ENCODE measurements at regions of chr2 and their contacts with region 1.

Region 1: GRCh38 chr2:196205881-196206435 is 34.6 kb upstream of the STK17B start:
- DNase-seq: no peak
- H3K4me3 ChIP-seq: no peak overlapping the region
- H3K4me3 Mint-ChIP-seq: no peak overlapping the region
- H3K27ac ChIP-seq: no peak overlapping the region
- H3K27ac Mint-ChIP-seq: peak overlapping the region in 3 of 7 donors; percentile 14 to 85 (median 24)
- H3K4me1 ChIP-seq: peaks cover 53% of the 10 kb centered on the region
- H3K4me1 Mint-ChIP-seq: peaks cover 46 to 55% (median 49%) of the 10 kb centered on the region in 4 donors
- H3K27me3 ChIP-seq: no peaks in the 10 kb centered on the region
- H3K27me3 Mint-ChIP-seq: no peaks in the 10 kb centered on the region

Region 2: DNA sequence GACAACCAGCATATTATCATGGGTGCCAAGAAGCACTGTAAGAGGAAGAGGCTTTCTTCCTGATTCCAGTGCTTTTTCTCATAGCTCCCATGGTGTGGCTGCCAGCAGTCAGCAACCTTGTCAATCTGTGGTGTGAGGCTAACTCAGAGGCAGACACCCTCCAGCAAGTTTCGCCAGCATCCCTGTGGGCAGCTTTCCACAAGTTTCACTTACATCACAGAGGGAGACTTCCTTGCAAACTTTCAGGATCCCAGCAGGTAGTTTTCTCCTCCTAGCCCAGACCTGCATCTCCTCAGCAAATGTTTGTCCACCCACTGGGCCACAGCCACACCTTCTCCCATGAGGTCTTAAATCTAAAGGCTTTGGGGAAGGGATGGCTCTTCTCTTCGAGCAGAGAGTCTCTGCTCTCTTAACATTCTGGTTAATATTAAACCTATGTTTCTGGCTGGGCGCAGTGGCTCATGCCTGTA is 146.4 kb before region 1 on chr2:
- CTCF ChIA-PET with region 1: no interaction called
- POLR2A ChIA-PET with region 1: no interaction called
- intact Hi-C with region 1: no loop called
- DNase-seq: no peak
- H3K4me3 ChIP-seq: no peak overlapping the region
- H3K4me3 Mint-ChIP-seq: no peak overlapping the region
- H3K27ac ChIP-seq: no peak overlapping the region
- H3K27ac Mint-ChIP-seq: peak overlapping the region in 1 of 7 donors; percentile 31
- H3K4me1 ChIP-seq: no peaks in the 10 kb centered on the region
- H3K4me1 Mint-ChIP-seq: no peaks in the 10 kb centered on the region
- H3K27me3 ChIP-seq: no peaks in the 10 kb centered on the region
- H3K27me3 Mint-ChIP-seq: peaks cover 3 to 7% of the 10 kb centered on the region in 2 donors

Region 3: GRCh38 chr2:196195302-196195701 is 10.7 kb before region 1 on chr2:
- CTCF ChIA-PET with region 1: interaction called, 10 read pairs
- POLR2A ChIA-PET with region 1: interaction called, 45 read pairs
- intact Hi-C with region 1: loop called (anchors 1 kb)
- DNase-seq: no peak
- H3K4me3 ChIP-seq: peak overlapping the region in 1 of 2 donors; percentile 34
- H3K4me3 Mint-ChIP-seq: peak overlapping the region; percentile 29 to 83 (median 74)
- H3K27ac ChIP-seq: no peak overlapping the region
- H3K27ac Mint-ChIP-seq: peak overlapping the region; percentile 23 to 91 (median 61)
- H3K4me1 ChIP-seq: peaks cover 61% of the 10 kb centered on the region
- H3K4me1 Mint-ChIP-seq: peaks cover 32 to 76% (median 53%) of the 10 kb centered on the region in 4 donors
- H3K27me3 ChIP-seq: no peaks in the 10 kb centered on the region
- H3K27me3 Mint-ChIP-seq: no peaks in the 10 kb centered on the region

Region 4: GRCh38 chr2:196798980-196799379 is 593.0 kb after region 1 on chr2:
- CTCF ChIA-PET with region 1: no interaction called
- POLR2A ChIA-PET with region 1: no interaction called
- intact Hi-C with region 1: no loop called
- DNase-seq: peak in 1 of 5 donors; percentile 1
- H3K4me3 ChIP-seq: peak overlapping the region; percentile 83 to 88
- H3K4me3 Mint-ChIP-seq: peak overlapping the region; percentile 95 to 100 (median 98)
- H3K27ac ChIP-seq: peak overlapping the region; percentile 58
- H3K27ac Mint-ChIP-seq: peak overlapping the region; percentile 77 to 99 (median 96)
- H3K4me1 ChIP-seq: peaks cover 14% of the 10 kb centered on the region
- H3K4me1 Mint-ChIP-seq: peaks cover 19 to 41% (median 28%) of the 10 kb centered on the region in 4 donors
- H3K27me3 ChIP-seq: no peaks in the 10 kb centered on the region
- H3K27me3 Mint-ChIP-seq: peaks cover 0 to 3% of the 10 kb centered on the region in 2 donors